Activated CD8-positive, alpha-beta T cell treated with anti-CD3 and anti-CD28 coated beads for 36 hours (primary cell): ENCODE measurements at regions of chr22 and their contacts with region 1.

Region 1: GRCh38 chr22:32411829-32412592 is at the start of gene RTCB:
- DNase-seq: peak; percentile 94
- ATAC-seq: peak; percentile 87
- H3K4me3 Mint-ChIP-seq: peak within 1 kb of the TSS; percentile 93
- H3K27ac Mint-ChIP-seq: peak within 1 kb of the TSS; percentile 95
- H3K4me1 Mint-ChIP-seq: peaks cover 51% of the 10 kb centered on the region
- H3K27me3 Mint-ChIP-seq: no peaks in the 10 kb centered on the region
- CTCF ChIP-seq: no peak
- total RNA-seq, gene RTCB: 77.9 to 82.7 TPM

Region 2: GRCh38 chr22:32202539-32203180 is 209.4 kb before region 1 on chr22:
- CTCF ChIA-PET with region 1: no interaction called
- POLR2A ChIA-PET with region 1: no interaction called
- intact Hi-C with region 1: no loop called
- DNase-seq: peak; percentile 39
- ATAC-seq: peak; percentile 47
- H3K4me3 Mint-ChIP-seq: peak overlapping the region; percentile 21
- H3K27ac Mint-ChIP-seq: no peak overlapping the region
- H3K4me1 Mint-ChIP-seq: peaks cover 15% of the 10 kb centered on the region
- H3K27me3 Mint-ChIP-seq: peaks cover 19% of the 10 kb centered on the region
- CTCF ChIP-seq: peak; percentile 41

Region 3: DNA sequence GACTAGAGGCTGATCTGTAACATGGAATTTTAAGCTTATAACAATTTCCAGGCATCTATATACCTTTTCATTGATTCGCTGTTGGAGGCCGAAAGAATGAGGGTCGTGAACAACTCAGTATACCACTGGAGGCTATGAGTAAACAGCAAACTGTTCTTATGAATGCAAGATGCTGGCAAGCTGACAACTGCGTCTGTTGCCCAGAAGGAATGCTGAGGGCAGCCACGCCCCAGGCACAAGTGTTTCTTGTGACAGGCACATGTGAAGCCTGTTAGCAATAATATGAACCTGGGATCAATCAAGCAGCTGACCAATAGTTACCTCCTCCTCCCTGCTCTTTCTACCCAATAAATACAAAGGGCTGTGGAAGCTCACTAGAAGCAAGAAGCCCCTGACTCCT is 15.3 kb before region 1 on chr22:
- CTCF ChIA-PET with region 1: interaction called, 4 read pairs
- POLR2A ChIA-PET with region 1: interaction called, 13 read pairs
- intact Hi-C with region 1: no loop called
- DNase-seq: no peak
- ATAC-seq: no peak
- H3K4me3 Mint-ChIP-seq: no peak overlapping the region
- H3K27ac Mint-ChIP-seq: no peak overlapping the region
- H3K4me1 Mint-ChIP-seq: peaks cover 7% of the 10 kb centered on the region
- H3K27me3 Mint-ChIP-seq: no peaks in the 10 kb centered on the region
- CTCF ChIP-seq: no peak

Region 4: DNA sequence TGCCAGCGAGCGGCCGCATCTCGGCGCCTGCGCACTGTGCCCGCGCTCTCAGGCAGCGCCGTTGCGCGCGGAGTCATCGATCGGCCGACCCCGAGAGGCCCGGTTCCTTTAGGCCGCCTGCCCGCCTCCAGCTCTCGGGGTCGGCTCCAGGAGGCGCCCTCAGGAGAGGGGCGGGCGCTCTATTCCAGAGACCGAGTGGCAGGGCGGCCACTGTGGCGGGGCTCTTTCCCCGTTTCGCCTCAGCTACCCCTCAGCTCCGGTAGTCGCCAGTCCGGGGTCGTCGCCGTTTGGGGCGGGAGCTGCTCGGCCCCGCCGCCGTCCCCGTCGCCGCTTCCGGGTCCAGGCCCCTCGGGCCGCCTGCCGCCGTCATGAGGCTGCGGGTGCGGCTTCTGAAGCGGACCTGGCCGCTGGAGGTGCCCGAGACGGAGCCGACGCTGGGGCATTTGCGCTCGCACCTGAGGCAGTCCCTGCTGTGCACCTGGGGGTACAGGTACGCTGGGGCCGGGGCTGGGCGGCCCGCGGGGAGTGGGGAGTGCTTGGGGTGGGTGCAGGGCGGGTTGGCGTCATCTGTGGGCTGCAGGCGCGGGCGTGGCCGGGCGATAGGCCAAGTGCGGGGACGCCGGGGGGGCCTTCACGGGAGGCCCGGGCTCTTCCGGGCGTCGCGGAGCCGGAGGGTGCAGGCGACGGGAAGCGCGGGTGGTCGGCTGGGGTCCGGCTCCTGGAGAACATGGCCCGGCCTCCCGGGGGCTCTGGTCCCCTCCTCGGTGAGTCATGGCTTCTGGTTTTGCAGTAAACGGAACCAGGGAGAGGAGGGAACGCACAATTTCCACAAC is 62.8 kb after region 1 on chr22 and contains the start of gene FBXO7:
- CTCF ChIA-PET with region 1: interaction called, 21 read pairs
- POLR2A ChIA-PET with region 1: interaction called, 15 read pairs
- intact Hi-C with region 1: loop called (anchors 5 kb)
- DNase-seq: peak; percentile 90
- ATAC-seq: peak; percentile 89
- H3K4me3 Mint-ChIP-seq: peak within 1 kb of the TSS; percentile 90
- H3K27ac Mint-ChIP-seq: peak within 1 kb of the TSS; percentile 96
- H3K4me1 Mint-ChIP-seq: peaks cover 16% of the 10 kb centered on the region
- H3K27me3 Mint-ChIP-seq: no peaks in the 10 kb centered on the region
- CTCF ChIP-seq: no peak
- total RNA-seq, gene FBXO7: 77.2 to 78.1 TPM